PC-3 (cell line): ENCODE measurements at regions of chr3 and their contacts with region 1.

Region 1: DNA sequence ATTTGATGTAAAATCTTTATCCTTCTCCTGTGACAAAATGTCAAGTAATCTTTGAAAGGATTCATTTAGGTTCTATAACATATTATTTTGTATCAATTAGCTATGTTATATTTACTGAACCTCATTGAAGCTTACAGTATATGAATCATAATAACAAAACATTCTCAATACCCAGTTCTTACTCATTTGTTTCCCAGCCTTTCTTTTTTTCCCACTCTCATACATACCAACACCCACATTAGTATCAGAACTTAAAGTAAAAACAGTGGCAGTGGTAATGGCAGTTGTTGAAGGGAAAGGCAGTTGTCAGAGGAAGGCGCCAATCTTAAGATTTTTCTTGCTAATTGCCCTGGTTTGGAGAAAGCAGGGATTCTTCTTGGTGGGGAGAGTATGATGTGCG is 33.2 kb upstream of the TRPC1 start:
- DNase-seq: no peak
- ATAC-seq: no peak
- H3K4me3 ChIP-seq: no peak overlapping the region
- H3K27ac ChIP-seq: no peak overlapping the region
- H3K4me1 ChIP-seq: no peaks in the 10 kb centered on the region
- H3K27me3 ChIP-seq: no peaks in the 10 kb centered on the region
- CTCF ChIP-seq: no peak

Region 2: DNA sequence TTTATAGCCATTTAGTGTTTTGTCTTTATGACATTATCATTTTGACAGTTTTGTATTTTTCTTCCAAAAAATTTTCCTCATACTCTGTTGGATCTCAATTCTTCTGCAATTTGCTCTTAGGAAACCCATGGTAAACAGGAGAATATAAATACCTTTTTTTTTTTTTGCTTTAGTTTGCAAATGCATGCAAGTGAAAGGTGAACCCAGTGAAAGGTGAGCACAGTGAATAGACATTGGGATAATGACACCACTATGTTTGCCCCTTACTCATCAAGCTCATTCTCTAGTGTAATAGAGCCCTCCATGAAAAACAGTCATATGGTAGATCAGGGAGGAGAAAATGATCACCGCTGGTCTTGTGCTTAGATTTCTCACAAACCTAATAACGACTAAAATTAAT is 25.8 kb before region 1 on chr3:
- CTCF ChIA-PET with region 1: no interaction called
- POLR2A ChIA-PET with region 1: no interaction called
- intact Hi-C with region 1: loop called (anchors 1 kb)
- DNase-seq: peak; percentile 5
- ATAC-seq: 0 out of 2 replicates have a peak, but pooled peaks have one; percentile 48
- H3K4me3 ChIP-seq: no peak overlapping the region
- H3K27ac ChIP-seq: peak overlapping the region; percentile 60
- H3K4me1 ChIP-seq: peaks cover 22% of the 10 kb centered on the region
- H3K27me3 ChIP-seq: no peaks in the 10 kb centered on the region
- CTCF ChIP-seq: no peak

Region 3: GRCh38 chr3:142875583-142876207 is 185.1 kb after region 1 on chr3:
- CTCF ChIA-PET with region 1: no interaction called
- POLR2A ChIA-PET with region 1: no interaction called
- intact Hi-C with region 1: no loop called
- DNase-seq: no peak
- ATAC-seq: no peak
- H3K4me3 ChIP-seq: no peak overlapping the region
- H3K27ac ChIP-seq: no peak overlapping the region
- H3K4me1 ChIP-seq: no peaks in the 10 kb centered on the region
- H3K27me3 ChIP-seq: no peaks in the 10 kb centered on the region
- CTCF ChIP-seq: no peak